ENCODE measurements at regions of chr9 and their contacts with region 1.

Region 1: DNA sequence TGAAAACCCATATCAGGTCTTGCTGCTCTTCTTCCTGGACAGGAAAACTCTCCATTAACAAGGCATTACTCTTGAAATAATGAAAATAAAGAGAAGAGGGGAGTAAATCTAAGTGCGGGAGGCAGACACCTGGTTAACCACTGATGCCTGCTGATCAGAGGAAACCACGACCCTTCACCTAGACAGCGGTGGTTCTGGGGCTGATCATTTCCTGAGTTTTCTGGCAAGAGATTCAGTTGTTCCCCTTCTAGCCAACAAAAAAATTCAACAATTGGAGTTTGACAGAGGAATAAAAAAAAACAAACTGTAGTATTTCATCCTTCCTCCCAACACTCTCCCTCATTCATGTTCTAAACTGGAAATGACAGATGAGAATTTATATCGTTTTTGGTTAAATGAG is 3.0 kb downstream of the RLN2 start:
- DNase-seq: peak in 5 of 14 experiments; percentile 7 to 47 (median 43)
- ATAC-seq: no peak
- H3K4me3 ChIP-seq: no peak overlapping the region
- H3K4me3 Mint-ChIP-seq: peak overlapping the region; percentile 77
- H3K27ac ChIP-seq: no peak overlapping the region
- H3K27ac Mint-ChIP-seq: peak overlapping the region; percentile 72
- H3K4me1 ChIP-seq: peaks cover 12% of the 10 kb centered on the region
- H3K4me1 Mint-ChIP-seq: peaks cover 34% of the 10 kb centered on the region
- H3K27me3 ChIP-seq: no peaks in the 10 kb centered on the region
- H3K27me3 Mint-ChIP-seq: no peaks in the 10 kb centered on the region
- CTCF ChIP-seq: no peak

Region 2: DNA sequence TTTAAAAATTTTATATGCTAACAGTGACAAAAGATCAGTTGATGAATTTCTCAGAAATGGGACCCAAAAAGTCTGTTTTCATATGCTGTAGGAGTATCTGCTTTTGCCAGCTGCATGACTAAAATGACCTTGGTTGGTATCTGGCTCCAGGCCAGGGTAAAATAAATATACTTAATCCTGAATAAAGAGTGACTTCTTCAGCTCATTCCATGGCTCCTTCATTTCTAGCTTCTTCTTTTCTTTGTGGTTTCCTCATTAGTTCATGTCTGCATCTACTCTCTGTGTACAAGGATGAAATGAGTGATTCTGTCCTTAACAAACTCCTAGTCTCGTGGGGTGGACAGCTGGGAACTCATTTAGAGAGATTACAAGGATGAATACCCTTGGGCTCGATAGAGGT is 472.8 kb before region 1 on chr9:
- CTCF ChIA-PET with region 1: no interaction called
- POLR2A ChIA-PET with region 1: no interaction called
- intact Hi-C with region 1: no loop called
- DNase-seq: no peak
- ATAC-seq: no peak
- H3K4me3 ChIP-seq: no peak overlapping the region
- H3K4me3 Mint-ChIP-seq: no peak overlapping the region
- H3K27ac ChIP-seq: no peak overlapping the region
- H3K27ac Mint-ChIP-seq: no peak overlapping the region
- H3K4me1 ChIP-seq: no peaks in the 10 kb centered on the region
- H3K4me1 Mint-ChIP-seq: peaks cover 14% of the 10 kb centered on the region
- H3K27me3 ChIP-seq: no peaks in the 10 kb centered on the region
- H3K27me3 Mint-ChIP-seq: no peaks in the 10 kb centered on the region
- CTCF ChIP-seq: no peak

Region 3: DNA sequence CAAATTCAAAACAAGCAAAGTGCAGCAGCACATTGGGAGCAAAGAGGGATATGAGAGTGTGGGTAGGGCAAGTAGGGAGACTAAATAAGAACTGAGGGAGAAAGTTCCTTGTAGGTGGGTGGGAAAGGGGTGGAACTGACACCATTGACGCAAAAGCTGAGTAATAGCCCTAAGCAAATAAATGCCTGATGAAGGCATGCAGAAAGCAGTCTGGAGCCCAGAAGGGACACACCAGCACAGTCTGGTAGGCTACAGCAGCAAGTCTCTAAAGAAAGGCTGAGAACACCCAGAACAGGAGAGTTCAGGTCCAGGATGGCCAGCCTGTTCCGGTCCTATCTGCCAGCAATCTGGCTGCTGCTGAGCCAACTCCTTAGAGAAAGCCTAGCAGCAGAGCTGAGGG is 70.3 kb before region 1 on chr9 and contains the start of gene INSL4:
- CTCF ChIA-PET with region 1: no interaction called
- POLR2A ChIA-PET with region 1: no interaction called
- intact Hi-C with region 1: no loop called
- DNase-seq: no peak
- ATAC-seq: no peak
- H3K4me3 ChIP-seq: no peak within 1 kb of the TSS
- H3K4me3 Mint-ChIP-seq: no peak within 1 kb of the TSS
- H3K27ac ChIP-seq: no peak within 1 kb of the TSS
- H3K27ac Mint-ChIP-seq: no peak within 1 kb of the TSS
- H3K4me1 ChIP-seq: no peaks in the 10 kb centered on the region
- H3K4me1 Mint-ChIP-seq: no peaks in the 10 kb centered on the region
- H3K27me3 ChIP-seq: no peaks in the 10 kb centered on the region
- H3K27me3 Mint-ChIP-seq: no peaks in the 10 kb centered on the region
- CTCF ChIP-seq: no peak
- total RNA-seq, gene INSL4: not detected

Region 4: DNA sequence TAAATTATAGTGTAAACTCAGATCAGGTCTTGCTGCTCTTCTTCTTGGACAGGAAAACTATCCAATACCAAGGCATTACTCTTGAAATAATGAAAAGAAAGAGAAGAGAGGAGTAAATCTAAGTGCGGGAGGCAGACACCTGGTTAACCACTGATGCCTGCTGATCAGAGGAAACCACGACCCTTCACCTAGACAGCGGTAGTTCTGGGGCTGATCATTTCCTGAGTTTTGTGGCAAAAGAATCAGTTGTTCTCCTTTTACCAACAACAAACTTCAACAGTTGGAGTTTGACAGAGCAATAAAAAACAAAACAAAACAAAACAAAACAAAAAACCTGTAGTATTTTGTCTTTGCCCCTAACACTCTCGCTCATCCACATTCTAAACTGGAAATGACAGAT is 35.1 kb after region 1 on chr9:
- CTCF ChIA-PET with region 1: no interaction called
- POLR2A ChIA-PET with region 1: no interaction called
- intact Hi-C with region 1: loop called in 1 of 2 experiments (anchors 2 kb)
- DNase-seq: peak in 12 of 14 experiments; percentile 5 to 74 (median 32)
- ATAC-seq: peak; percentile 41
- H3K4me3 ChIP-seq: peak overlapping the region; percentile 17
- H3K4me3 Mint-ChIP-seq: peak overlapping the region; percentile 81
- H3K27ac ChIP-seq: peak overlapping the region; percentile 47 to 52
- H3K27ac Mint-ChIP-seq: peak overlapping the region; percentile 78
- H3K4me1 ChIP-seq: peaks cover 19% of the 10 kb centered on the region
- H3K4me1 Mint-ChIP-seq: peaks cover 54% of the 10 kb centered on the region
- H3K27me3 ChIP-seq: no peaks in the 10 kb centered on the region
- H3K27me3 Mint-ChIP-seq: no peaks in the 10 kb centered on the region
- CTCF ChIP-seq: no peak

Region 5: DNA sequence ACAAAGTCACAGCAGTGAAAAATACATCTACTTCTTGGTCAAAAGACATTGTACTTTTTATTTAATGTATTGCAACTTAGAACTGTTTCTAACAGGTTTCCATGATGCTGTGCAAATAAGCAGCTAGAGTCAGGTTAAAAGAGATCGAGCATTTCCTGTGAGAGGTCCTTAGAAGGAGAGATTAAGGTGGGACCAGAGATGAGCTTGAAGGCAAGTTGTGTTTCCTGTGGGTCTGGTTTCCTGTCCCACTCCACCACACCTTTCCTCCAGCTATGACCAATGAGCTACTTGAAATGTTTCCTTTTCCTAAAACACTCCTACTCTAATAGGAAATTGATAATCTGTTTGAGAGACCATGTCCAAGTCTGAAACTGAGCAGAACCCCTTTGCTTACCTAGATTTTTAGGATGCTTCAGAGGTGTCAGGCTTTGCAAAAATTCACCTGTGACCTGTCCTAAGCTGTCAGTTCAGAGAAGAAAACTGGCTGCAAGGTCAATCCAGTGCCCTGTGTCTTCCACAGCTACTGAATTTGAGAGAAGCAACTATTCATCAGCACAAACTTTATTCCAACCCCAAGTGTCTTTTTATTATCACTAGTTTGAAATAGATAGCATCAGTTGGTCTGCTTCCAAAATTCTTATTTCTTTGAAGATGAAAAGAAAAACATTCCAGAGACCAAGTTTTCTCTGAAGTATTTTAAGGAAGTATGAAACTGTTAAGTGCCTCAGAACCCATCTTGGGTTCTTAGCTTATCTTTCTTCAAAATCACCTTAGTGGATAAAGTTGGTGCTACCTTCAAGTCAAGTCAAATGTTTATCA is 51.3 kb after region 1 on chr9:
- CTCF ChIA-PET with region 1: no interaction called
- POLR2A ChIA-PET with region 1: interaction called, 4 read pairs
- intact Hi-C with region 1: loop called in 1 of 2 experiments (anchors 10 kb)
- DNase-seq: peak in 5 of 14 experiments; percentile 9 to 81 (median 26)
- ATAC-seq: peak; percentile 74
- H3K4me3 ChIP-seq: no peak overlapping the region
- H3K4me3 Mint-ChIP-seq: peak overlapping the region; percentile 59
- H3K27ac ChIP-seq: no peak overlapping the region
- H3K27ac Mint-ChIP-seq: peak overlapping the region; percentile 59
- H3K4me1 ChIP-seq: peaks cover 27% of the 10 kb centered on the region
- H3K4me1 Mint-ChIP-seq: peaks cover 48% of the 10 kb centered on the region
- H3K27me3 ChIP-seq: no peaks in the 10 kb centered on the region
- H3K27me3 Mint-ChIP-seq: no peaks in the 10 kb centered on the region
- CTCF ChIP-seq: no peak

Region 6: GRCh38 chr9:6034954-6035353 is 733.4 kb after region 1 on chr9:
- CTCF ChIA-PET with region 1: no interaction called
- POLR2A ChIA-PET with region 1: no interaction called
- intact Hi-C with region 1: no loop called
- DNase-seq: no peak
- ATAC-seq: no peak
- H3K4me3 ChIP-seq: no peak overlapping the region
- H3K4me3 Mint-ChIP-seq: no peak overlapping the region
- H3K27ac ChIP-seq: no peak overlapping the region
- H3K27ac Mint-ChIP-seq: no peak overlapping the region
- H3K4me1 ChIP-seq: no peaks in the 10 kb centered on the region
- H3K4me1 Mint-ChIP-seq: no peaks in the 10 kb centered on the region
- H3K27me3 ChIP-seq: no peaks in the 10 kb centered on the region
- H3K27me3 Mint-ChIP-seq: peaks cover 4% of the 10 kb centered on the region
- CTCF ChIP-seq: no peak